ENCODE measurements at regions of chr6 and their contacts with region 1.

Region 1: DNA sequence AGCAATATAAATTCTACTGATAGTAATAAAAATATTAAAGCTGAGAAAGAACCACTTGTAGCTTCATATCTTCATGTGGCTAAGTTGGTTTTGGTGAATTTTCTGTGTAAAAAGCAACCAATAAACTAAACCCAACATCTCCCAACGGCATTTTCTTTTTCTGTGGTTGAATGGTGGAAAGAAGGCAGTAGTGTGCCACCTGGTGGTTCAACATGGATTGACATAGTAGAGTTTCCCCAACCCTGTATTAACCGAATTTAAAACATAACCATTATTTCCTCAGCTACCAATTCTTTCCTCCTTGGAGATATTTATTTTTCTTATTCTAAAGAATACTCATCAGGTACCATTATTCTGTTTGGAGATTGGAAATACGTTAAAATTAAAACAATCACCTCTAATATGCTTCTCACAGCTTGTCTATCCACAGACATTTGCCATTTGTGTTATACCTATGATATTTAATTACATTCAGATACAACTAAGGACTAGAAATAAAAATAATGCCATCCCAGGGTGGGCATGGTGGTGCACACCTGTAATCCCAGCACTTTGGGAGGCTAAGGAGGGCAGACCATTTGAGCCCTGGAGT is 117.1 kb upstream of the EEF1E1 start:
- DNase-seq: peak; percentile 65
- ATAC-seq: no peak
- H3K4me3 Mint-ChIP-seq: no peak overlapping the region
- H3K27ac Mint-ChIP-seq: no peak overlapping the region
- H3K4me1 Mint-ChIP-seq: no peaks in the 10 kb centered on the region
- H3K27me3 Mint-ChIP-seq: peaks cover 2% of the 10 kb centered on the region
- CTCF ChIP-seq: peak; percentile 79

Region 2: DNA sequence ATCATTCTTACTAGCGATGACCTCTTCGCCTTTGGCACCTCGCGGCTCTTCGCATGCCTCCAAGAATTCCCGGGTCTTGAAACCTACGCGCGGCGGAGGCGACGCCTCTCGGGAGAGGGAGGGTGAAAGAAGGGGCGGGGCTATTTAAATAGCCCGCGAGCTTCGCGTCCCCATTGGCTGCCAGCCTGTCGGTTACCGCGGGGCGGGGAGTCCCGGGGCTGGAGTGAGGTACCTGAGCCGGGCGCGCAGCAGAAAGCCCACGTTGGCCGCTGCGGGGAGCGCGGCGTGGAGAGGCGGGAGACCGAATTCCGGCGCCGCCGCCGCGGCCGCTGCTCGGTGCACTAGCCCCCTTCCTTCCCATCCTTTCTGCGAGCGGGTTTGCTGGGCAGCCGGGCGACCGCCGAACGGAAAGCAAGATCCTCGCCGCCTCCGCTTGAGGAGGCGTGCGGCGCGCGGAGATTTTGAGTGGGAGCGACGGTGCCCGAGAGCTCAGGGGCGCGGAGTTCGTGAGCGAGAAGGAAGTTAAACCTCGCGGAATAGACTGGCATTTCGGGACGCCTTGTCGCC is 493.5 kb before region 1 on chr6 and contains the start of gene BMP6:
- CTCF ChIA-PET with region 1: interaction called, 33 read pairs
- POLR2A ChIA-PET with region 1: no interaction called
- intact Hi-C with region 1: loop called (anchors 5 kb)
- DNase-seq: peak; percentile 71
- ATAC-seq: peak; percentile 72
- H3K4me3 Mint-ChIP-seq: peak within 1 kb of the TSS; percentile 68
- H3K27ac Mint-ChIP-seq: no peak within 1 kb of the TSS
- H3K4me1 Mint-ChIP-seq: peaks cover 11% of the 10 kb centered on the region
- H3K27me3 Mint-ChIP-seq: peaks cover 68% of the 10 kb centered on the region
- CTCF ChIP-seq: no peak
- total RNA-seq, gene BMP6: 0.09 to 0.18 TPM

Region 3: GRCh38 chr6:8131256-8131897 is 88.1 kb before region 1 on chr6:
- CTCF ChIA-PET with region 1: interaction called, 145 read pairs
- POLR2A ChIA-PET with region 1: no interaction called
- intact Hi-C with region 1: loop called (anchors 1 kb)
- DNase-seq: peak; percentile 64
- ATAC-seq: peak; percentile 85
- H3K4me3 Mint-ChIP-seq: no peak overlapping the region
- H3K27ac Mint-ChIP-seq: no peak overlapping the region
- H3K4me1 Mint-ChIP-seq: peaks cover 2% of the 10 kb centered on the region
- H3K27me3 Mint-ChIP-seq: peaks cover 13% of the 10 kb centered on the region
- CTCF ChIP-seq: peak; percentile 50

Region 4: DNA sequence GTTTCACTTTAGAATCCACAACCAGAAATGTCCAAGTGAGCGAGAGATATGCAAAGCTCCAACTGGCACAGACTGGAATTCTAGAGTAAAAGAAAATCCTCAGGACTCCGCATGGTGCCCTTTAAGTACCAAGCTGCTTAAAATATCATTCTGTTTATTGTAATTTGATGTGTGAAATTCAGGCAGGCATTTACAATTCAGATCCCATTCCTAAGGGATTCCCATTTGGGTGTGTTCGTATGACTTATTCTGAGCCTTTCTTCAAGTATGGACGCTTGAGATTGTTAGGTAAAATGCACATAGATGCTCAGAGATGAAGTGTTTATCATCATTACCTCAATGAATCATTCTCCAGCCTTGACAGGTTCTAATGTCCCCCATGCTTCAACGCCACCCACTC is 17.8 kb before region 1 on chr6:
- CTCF ChIA-PET with region 1: interaction called, 15 read pairs
- POLR2A ChIA-PET with region 1: interaction called, 3 read pairs
- intact Hi-C with region 1: no loop called
- DNase-seq: no peak
- ATAC-seq: no peak
- H3K4me3 Mint-ChIP-seq: no peak overlapping the region
- H3K27ac Mint-ChIP-seq: no peak overlapping the region
- H3K4me1 Mint-ChIP-seq: no peaks in the 10 kb centered on the region
- H3K27me3 Mint-ChIP-seq: peaks cover 13% of the 10 kb centered on the region
- CTCF ChIP-seq: no peak

Region 5: DNA sequence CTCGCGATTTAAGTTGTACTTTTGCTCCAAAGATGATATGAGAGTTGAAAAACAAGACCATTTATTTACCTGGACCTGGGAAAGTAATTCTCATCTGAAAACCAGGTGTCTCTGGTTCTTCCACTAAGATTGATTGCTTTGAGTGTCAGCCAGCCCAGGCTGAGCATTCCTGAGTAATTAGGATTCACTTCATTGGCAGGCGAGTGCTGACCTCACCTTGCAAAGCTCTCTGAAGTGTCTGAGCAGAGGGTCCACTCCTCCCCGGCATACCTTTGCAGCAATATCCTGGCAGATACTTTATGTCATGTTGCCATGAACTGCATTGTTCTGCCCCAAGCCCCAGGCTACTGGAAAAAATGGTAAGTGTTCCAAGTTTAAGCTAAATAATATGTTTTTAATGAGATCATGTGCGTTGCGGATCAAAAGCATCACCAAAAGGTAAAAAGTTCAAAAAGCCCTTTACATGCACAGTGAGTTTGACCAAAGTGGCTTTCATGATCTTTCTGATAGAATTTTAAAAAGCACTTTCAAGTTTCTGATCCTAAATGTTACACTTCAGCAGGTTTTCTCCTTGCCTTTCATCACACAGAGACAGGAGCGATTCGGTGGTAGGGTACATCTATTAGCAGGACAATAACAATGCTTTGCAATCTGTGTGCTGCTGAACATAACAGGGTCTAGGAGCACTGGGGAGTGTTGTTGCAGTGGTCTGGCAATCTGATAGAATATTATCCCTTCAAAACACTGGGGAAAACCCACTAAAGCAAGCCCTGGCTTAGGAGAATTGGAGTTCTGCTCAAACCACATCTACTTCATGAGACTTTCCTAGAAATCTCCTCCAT is 10.7 kb after region 1 on chr6:
- CTCF ChIA-PET with region 1: interaction called, 20 read pairs
- POLR2A ChIA-PET with region 1: no interaction called
- intact Hi-C with region 1: no loop called
- DNase-seq: no peak
- ATAC-seq: no peak
- H3K4me3 Mint-ChIP-seq: no peak overlapping the region
- H3K27ac Mint-ChIP-seq: no peak overlapping the region
- H3K4me1 Mint-ChIP-seq: no peaks in the 10 kb centered on the region
- H3K27me3 Mint-ChIP-seq: peaks cover 8% of the 10 kb centered on the region
- CTCF ChIP-seq: no peak

Measured in activated CD8-positive, alpha-beta T cell treated with anti-CD3 and anti-CD28 coated beads for 36 hours (primary cell).